CD8-positive, alpha-beta memory T cell (primary cell): ENCODE measurements at regions of chr19 and their contacts with region 1.

Region 1: GRCh38 chr19:13155472-13156359 is 5.5 kb downstream of the IER2 start:
- DNase-seq: peak; percentile 66 to 87 (median 82)
- H3K4me3 ChIP-seq: peak overlapping the region; percentile 76
- H3K4me3 Mint-ChIP-seq: peak overlapping the region; percentile 94 to 100 (median 99)
- H3K27ac ChIP-seq: peak overlapping the region; percentile 99
- H3K27ac Mint-ChIP-seq: peak overlapping the region; percentile 97 to 99 (median 98)
- H3K4me1 ChIP-seq: peaks cover 40% of the 10 kb centered on the region
- H3K4me1 Mint-ChIP-seq: peaks cover 36 to 62% (median 50%) of the 10 kb centered on the region in 3 donors
- H3K27me3 ChIP-seq: no peaks in the 10 kb centered on the region
- H3K27me3 Mint-ChIP-seq: peaks cover 0 to 22% of the 10 kb centered on the region in 2 donors

Region 2: DNA sequence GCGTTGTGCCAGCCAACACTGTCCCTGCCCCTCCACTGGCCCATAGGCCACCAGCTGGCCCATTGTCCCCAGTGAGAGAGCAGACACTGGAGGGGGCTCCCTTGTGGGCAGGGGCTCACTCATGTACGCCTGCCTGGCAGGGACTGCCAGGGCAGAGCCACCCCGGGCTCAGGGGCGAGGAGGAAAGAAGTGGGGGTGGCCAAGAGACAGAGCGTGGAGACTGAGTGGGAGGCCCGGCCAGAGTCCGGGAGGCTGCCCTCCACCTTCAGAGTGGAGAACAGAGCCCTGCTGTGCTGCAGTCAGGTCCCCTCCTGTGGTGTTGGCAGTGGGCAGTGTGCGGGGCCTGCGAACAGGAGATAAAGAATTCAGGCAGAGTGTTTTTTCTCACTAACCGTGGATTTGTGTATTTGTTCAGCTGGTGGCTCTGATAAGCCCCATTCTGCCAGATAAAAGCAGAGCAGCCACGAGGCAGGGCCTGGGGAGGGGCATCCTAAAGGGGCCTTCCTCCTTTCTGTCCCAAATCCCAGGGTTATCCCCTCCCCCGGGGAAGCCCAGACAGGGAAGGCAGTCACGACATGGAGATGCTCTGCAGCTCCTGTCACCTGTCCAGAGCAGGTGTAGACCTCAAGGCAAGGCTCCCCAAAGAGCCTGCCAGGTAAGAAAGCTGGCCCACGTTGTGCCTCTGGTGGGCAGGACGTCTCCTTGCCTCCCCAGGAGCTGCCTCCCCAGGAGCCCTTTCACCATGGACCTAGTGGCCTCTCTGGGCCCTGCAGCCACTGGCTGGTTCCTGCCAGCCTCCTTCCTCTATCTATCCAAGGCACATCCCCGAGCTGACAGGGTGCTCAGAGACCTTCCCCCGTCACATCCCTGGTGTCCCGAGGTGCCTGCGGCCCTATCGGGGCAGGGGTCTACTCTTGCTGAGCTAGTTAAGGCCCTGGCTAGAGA is 86.0 kb before region 1 on chr19:
- CTCF ChIA-PET with region 1: no interaction called
- POLR2A ChIA-PET with region 1: no interaction called
- DNase-seq: no peak
- H3K4me3 ChIP-seq: no peak overlapping the region
- H3K4me3 Mint-ChIP-seq: no peak overlapping the region
- H3K27ac ChIP-seq: peak overlapping the region; percentile 69
- H3K27ac Mint-ChIP-seq: no peak overlapping the region
- H3K4me1 ChIP-seq: no peaks in the 10 kb centered on the region
- H3K4me1 Mint-ChIP-seq: no peaks in the 10 kb centered on the region
- H3K27me3 ChIP-seq: no peaks in the 10 kb centered on the region
- H3K27me3 Mint-ChIP-seq: peaks cover 5 to 6% of the 10 kb centered on the region in 2 donors

Region 3: DNA sequence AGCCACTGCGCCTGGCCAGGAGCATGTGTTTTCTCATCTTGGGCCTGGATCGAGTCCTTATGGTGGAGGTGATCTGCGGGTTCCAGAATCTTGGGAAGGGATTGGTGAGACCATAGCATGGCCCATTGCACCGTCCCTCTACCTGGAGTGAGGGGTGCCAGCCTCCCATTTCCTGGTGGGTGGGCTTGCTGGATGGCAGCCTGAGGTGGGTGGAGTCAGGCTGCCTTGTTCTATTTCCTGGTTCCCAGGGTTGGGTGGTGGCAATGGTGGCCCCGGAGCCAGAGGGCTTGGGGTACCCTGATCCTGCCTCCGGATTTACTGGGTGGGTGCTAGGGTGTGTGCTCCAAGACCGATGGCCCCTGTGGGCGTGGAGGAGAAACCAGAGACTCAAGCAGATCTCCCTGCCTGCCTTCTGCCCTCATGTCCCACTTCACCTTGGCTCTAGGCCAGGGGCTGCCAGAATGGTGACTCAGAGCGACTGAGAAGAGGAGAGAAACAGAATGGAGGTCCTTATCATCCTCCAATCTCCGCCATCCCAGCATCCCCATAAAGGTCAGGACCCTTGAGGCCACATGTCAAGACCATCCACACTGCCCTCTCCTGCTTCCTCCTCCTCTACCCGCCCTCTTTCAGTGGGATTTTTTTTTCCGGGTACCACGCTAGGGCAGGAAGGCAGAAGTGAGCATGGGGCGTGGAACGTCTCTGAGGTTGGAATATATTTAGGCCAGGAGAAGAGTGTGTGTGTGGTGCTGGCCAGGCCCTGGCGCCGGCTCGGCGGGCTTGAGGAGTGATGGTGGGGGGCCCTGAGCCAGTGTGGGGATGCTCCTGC is 16.6 kb after region 1 on chr19:
- CTCF ChIA-PET with region 1: interaction called, 73 read pairs
- POLR2A ChIA-PET with region 1: interaction called, 129 read pairs
- DNase-seq: peak; percentile 64 to 91 (median 68)
- H3K4me3 ChIP-seq: peak overlapping the region; percentile 51
- H3K4me3 Mint-ChIP-seq: peak overlapping the region; percentile 82 to 92 (median 87)
- H3K27ac ChIP-seq: peak overlapping the region; percentile 39
- H3K27ac Mint-ChIP-seq: peak overlapping the region; percentile 95 to 98 (median 97)
- H3K4me1 ChIP-seq: peaks cover 66% of the 10 kb centered on the region
- H3K4me1 Mint-ChIP-seq: peaks cover 51 to 70% (median 57%) of the 10 kb centered on the region in 3 donors
- H3K27me3 ChIP-seq: no peaks in the 10 kb centered on the region
- H3K27me3 Mint-ChIP-seq: no peaks in the 10 kb centered on the region

Region 4: GRCh38 chr19:13181747-13182388 is 26.2 kb after region 1 on chr19:
- CTCF ChIA-PET with region 1: interaction called, 15 read pairs
- POLR2A ChIA-PET with region 1: interaction called, 31 read pairs
- DNase-seq: peak; percentile 19 to 70 (median 35)
- H3K4me3 ChIP-seq: peak overlapping the region; percentile 41
- H3K4me3 Mint-ChIP-seq: peak overlapping the region in 6 of 7 donors; percentile 68 to 89 (median 71)
- H3K27ac ChIP-seq: no peak overlapping the region
- H3K27ac Mint-ChIP-seq: peak overlapping the region; percentile 83 to 97 (median 90)
- H3K4me1 ChIP-seq: peaks cover 26% of the 10 kb centered on the region
- H3K4me1 Mint-ChIP-seq: peaks cover 22 to 41% (median 23%) of the 10 kb centered on the region in 3 donors
- H3K27me3 ChIP-seq: no peaks in the 10 kb centered on the region
- H3K27me3 Mint-ChIP-seq: no peaks in the 10 kb centered on the region

Region 5: GRCh38 chr19:13207237-13207845 is 51.6 kb after region 1 on chr19:
- CTCF ChIA-PET with region 1: interaction called, 13 read pairs
- POLR2A ChIA-PET with region 1: interaction called, 11 read pairs
- DNase-seq: no peak
- H3K4me3 ChIP-seq: no peak overlapping the region
- H3K4me3 Mint-ChIP-seq: no peak overlapping the region
- H3K27ac ChIP-seq: no peak overlapping the region
- H3K27ac Mint-ChIP-seq: peak overlapping the region in 1 of 8 donors; percentile 41
- H3K4me1 ChIP-seq: no peaks in the 10 kb centered on the region
- H3K4me1 Mint-ChIP-seq: peaks cover 10 to 21% (median 10%) of the 10 kb centered on the region in 3 donors
- H3K27me3 ChIP-seq: no peaks in the 10 kb centered on the region
- H3K27me3 Mint-ChIP-seq: no peaks in the 10 kb centered on the region

Region 6: GRCh38 chr19:13212759-13213330 is 57.1 kb after region 1 on chr19:
- CTCF ChIA-PET with region 1: interaction called, 13 read pairs
- POLR2A ChIA-PET with region 1: interaction called, 4 read pairs
- DNase-seq: peak; percentile 55 to 83 (median 58)
- H3K4me3 ChIP-seq: no peak overlapping the region
- H3K4me3 Mint-ChIP-seq: peak overlapping the region in 4 of 7 donors; percentile 20 to 87 (median 48)
- H3K27ac ChIP-seq: no peak overlapping the region
- H3K27ac Mint-ChIP-seq: peak overlapping the region in 3 of 8 donors; percentile 0 to 91 (median 90)
- H3K4me1 ChIP-seq: no peaks in the 10 kb centered on the region
- H3K4me1 Mint-ChIP-seq: peaks cover 20 to 38% (median 25%) of the 10 kb centered on the region in 3 donors
- H3K27me3 ChIP-seq: no peaks in the 10 kb centered on the region
- H3K27me3 Mint-ChIP-seq: no peaks in the 10 kb centered on the region

Region 7: GRCh38 chr19:13484166-13484565 is 328.4 kb after region 1 on chr19:
- CTCF ChIA-PET with region 1: no interaction called
- POLR2A ChIA-PET with region 1: no interaction called
- DNase-seq: no peak
- H3K4me3 ChIP-seq: no peak overlapping the region
- H3K4me3 Mint-ChIP-seq: no peak overlapping the region
- H3K27ac ChIP-seq: no peak overlapping the region
- H3K27ac Mint-ChIP-seq: no peak overlapping the region
- H3K4me1 ChIP-seq: no peaks in the 10 kb centered on the region
- H3K4me1 Mint-ChIP-seq: no peaks in the 10 kb centered on the region
- H3K27me3 ChIP-seq: no peaks in the 10 kb centered on the region
- H3K27me3 Mint-ChIP-seq: peaks cover 25 to 48% of the 10 kb centered on the region in 2 donors